CD14-positive monocyte (primary cell): ENCODE measurements at regions of chr20 and their contacts with region 1.

Region 1: DNA sequence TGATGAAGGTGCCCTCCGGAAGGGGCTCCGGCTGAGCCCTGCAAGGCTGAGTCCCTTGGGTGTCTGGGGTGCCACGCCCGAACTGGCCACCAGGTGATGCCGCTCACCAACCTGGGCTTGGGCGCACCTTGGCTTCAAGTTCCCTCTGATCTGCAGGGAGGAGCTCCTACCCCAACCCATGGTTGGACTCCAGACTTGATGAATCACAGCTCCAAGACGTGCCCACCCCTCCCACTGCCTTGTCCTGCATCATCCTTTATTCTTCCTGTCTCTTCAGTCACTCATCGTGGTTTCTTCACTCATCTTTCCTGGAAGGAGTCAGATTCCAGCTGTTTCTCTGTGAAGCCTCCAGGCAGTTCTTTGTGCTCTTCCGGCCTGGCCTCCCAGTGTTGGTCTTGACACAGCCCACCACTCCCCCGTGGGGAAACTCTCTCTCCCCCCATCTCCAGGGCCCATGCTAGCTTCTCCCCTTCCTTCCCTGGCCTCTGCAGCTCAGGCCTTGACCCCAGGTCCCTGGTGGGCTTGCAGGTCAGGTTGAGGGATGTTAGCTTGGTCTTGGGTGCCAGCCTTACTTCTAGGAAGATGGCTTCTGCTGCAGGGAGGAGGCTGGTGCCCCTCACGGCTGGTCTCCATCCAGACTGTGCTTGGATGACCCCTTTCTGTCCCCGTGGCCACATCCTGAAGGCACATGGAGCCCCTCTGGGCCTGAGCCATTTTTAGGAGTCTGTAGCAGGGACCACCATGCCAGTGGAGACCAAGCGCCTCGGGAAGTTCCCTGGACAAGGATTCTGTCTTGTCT is 2.6 kb upstream of the ZBP1 start:
- DNase-seq: peak in 2 of 3 donors; percentile 36 to 48
- H3K4me3 ChIP-seq: no peak overlapping the region
- H3K4me3 Mint-ChIP-seq: no peak overlapping the region
- H3K27ac ChIP-seq: no peak overlapping the region
- H3K27ac Mint-ChIP-seq: peak overlapping the region in 2 of 7 donors; percentile 18 to 38
- H3K4me1 ChIP-seq: peaks cover 55 to 62% of the 10 kb centered on the region in 2 donors
- H3K4me1 Mint-ChIP-seq: peaks cover 61% of the 10 kb centered on the region
- H3K27me3 ChIP-seq: no peaks in the 10 kb centered on the region
- H3K27me3 Mint-ChIP-seq: peaks cover 0 to 4% (median 3%) of the 10 kb centered on the region in 3 donors
- CTCF ChIP-seq: peak; percentile 72

Region 2: DNA sequence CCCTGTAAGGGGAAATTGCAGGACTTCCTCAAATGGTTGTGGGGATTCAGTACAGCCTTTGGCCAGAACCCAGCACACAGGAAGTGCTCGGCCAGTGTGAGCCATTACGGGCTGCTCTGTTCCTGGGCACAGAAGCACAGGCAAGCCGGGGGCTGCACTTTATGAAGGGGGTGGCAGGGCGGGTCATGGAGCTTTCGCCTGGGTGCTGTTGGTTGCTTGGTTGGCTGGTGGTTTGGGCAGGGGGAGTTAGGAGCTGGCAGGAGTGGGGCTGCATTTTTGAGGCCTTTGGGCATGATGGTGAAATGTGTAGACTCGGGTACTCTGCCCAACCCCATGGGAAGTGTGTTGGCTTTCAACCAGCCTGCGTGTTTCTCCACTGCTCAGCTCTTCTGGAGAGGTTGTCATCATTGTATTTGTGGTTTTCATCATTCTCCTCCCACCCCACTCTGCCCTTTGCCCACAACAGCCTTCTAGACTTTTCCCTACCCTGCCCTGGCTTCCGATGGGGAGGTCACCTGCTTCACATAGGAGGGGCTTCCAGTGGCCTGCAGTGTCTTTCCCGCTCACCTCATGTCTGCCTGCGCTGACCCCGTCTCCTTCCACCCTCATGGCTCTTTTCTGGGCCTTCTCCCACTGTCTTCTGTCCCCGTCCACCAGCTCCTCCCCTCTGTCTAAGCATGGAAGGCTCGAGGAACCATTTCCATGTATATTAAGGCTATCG is 247.7 kb before region 1 on chr20:
- intact Hi-C with region 1: loop called in 1 of 2 experiments (anchors 10 kb)
- DNase-seq: peak; percentile 88 to 95 (median 91)
- H3K4me3 ChIP-seq: peak overlapping the region; percentile 18 to 82 (median 40)
- H3K4me3 Mint-ChIP-seq: peak overlapping the region; percentile 88 to 93
- H3K27ac ChIP-seq: peak overlapping the region; percentile 71 to 87
- H3K27ac Mint-ChIP-seq: peak overlapping the region; percentile 97 to 99 (median 98)
- H3K4me1 ChIP-seq: peaks cover 25 to 33% of the 10 kb centered on the region in 2 donors
- H3K4me1 Mint-ChIP-seq: peaks cover 39% of the 10 kb centered on the region
- H3K27me3 ChIP-seq: no peaks in the 10 kb centered on the region
- H3K27me3 Mint-ChIP-seq: peaks cover 0 to 6% (median 0%) of the 10 kb centered on the region in 3 donors
- CTCF ChIP-seq: no peak

Region 3: GRCh38 chr20:57609861-57610205 is 12.9 kb before region 1 on chr20:
- intact Hi-C with region 1: no loop called
- DNase-seq: no peak
- H3K4me3 ChIP-seq: no peak overlapping the region
- H3K4me3 Mint-ChIP-seq: no peak overlapping the region
- H3K27ac ChIP-seq: no peak overlapping the region
- H3K27ac Mint-ChIP-seq: no peak overlapping the region
- H3K4me1 ChIP-seq: no peaks in the 10 kb centered on the region
- H3K4me1 Mint-ChIP-seq: peaks cover 4% of the 10 kb centered on the region
- H3K27me3 ChIP-seq: no peaks in the 10 kb centered on the region
- H3K27me3 Mint-ChIP-seq: peaks cover 6 to 28% (median 6%) of the 10 kb centered on the region in 3 donors
- CTCF ChIP-seq: no peak

Region 4: DNA sequence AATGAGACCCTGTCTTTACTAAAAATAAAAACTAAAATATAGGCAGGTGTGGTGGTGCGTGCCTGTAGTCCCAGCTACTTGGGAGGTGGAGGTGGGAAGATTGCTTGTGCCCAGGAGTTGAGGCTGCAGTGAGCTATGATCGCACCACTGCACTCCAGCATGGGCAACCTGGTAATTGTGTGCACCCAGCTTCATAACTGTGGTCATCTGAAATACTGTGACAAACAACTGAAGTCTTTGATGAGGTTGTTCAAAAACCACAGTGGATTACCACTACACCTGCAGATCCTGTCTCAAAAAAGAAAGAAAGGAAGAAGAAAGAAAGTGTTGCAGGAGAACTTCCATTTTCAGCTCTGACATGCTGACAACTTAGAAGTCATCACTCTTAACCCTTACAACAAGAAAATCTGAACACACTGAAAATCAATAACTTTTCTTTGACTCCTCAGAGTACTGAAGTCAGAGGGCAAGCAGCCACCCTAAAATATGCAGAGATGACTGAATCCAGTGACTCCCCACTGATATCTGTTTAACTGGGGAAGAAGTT is 11.2 kb after region 1 on chr20:
- intact Hi-C with region 1: loop called in 1 of 2 experiments (anchors 2 kb)
- DNase-seq: no peak
- H3K4me3 ChIP-seq: no peak overlapping the region
- H3K4me3 Mint-ChIP-seq: no peak overlapping the region
- H3K27ac ChIP-seq: no peak overlapping the region
- H3K27ac Mint-ChIP-seq: no peak overlapping the region
- H3K4me1 ChIP-seq: peaks cover 15 to 17% of the 10 kb centered on the region in 2 donors
- H3K4me1 Mint-ChIP-seq: peaks cover 14% of the 10 kb centered on the region
- H3K27me3 ChIP-seq: peaks cover 4 to 6% of the 10 kb centered on the region in 2 donors
- H3K27me3 Mint-ChIP-seq: peaks cover 13 to 17% (median 14%) of the 10 kb centered on the region in 3 donors
- CTCF ChIP-seq: no peak

Region 5: DNA sequence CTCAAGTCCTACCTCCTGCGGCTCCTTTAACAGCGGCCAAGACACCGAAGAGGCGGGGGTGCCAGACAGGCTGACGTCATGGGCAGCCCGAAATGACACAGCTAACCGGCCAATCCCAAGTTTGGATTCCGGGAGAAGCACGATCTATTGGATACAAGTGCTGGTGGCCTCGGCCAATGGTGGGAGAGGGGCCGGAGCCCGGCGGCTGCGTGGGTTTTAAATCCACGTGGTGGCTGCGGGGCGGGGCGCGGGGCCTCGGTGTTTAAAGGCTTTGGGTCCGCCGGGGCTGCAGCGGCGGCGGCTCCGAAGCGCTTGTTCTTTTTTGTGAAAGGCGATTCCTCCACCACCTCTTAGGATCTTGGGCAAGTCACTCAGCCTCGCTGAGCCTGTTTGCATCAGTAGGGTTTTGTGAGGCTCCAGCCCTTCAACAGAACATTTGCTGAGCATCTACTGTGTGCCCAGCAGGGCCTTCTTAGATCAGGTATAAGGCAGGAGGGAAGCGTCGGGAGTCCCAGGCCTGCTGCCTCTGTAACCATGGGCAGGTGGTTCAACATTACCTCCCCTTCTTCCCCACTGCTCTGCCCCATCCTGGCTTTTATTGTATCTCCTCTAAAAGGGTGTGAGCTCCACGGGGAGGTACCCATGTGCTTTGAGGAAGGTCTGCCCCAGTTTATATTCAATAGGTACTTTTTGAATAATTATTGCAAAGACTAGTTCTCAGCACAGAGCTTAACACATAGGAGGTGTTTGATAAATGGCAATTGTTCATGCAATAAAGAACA is 95.9 kb after region 1 on chr20:
- intact Hi-C with region 1: loop called in 1 of 2 experiments (anchors 10 kb)
- DNase-seq: peak; percentile 89 to 94 (median 91)
- H3K4me3 ChIP-seq: peak overlapping the region in 1 of 3 experiments; percentile 34
- H3K4me3 Mint-ChIP-seq: peak overlapping the region; percentile 55 to 73
- H3K27ac ChIP-seq: no peak overlapping the region
- H3K27ac Mint-ChIP-seq: no peak overlapping the region
- H3K4me1 ChIP-seq: peaks cover 9 to 10% of the 10 kb centered on the region in 2 donors
- H3K4me1 Mint-ChIP-seq: peaks cover 5% of the 10 kb centered on the region
- H3K27me3 ChIP-seq: no peaks in the 10 kb centered on the region
- H3K27me3 Mint-ChIP-seq: peaks cover 9 to 34% (median 16%) of the 10 kb centered on the region in 3 donors
- CTCF ChIP-seq: no peak